ENCODE measurements at regions of chr15 and their contacts with region 1.

Region 1: GRCh38 chr15:86624261-86625036 is 544.8 kb downstream of the AGBL1 start:
- DNase-seq: peak; percentile 84
- H3K4me3 Mint-ChIP-seq: peak overlapping the region; percentile 4
- H3K27ac Mint-ChIP-seq: peak overlapping the region; percentile 69
- H3K4me1 Mint-ChIP-seq: peaks cover 19% of the 10 kb centered on the region
- H3K27me3 Mint-ChIP-seq: no peaks in the 10 kb centered on the region

Region 2: DNA sequence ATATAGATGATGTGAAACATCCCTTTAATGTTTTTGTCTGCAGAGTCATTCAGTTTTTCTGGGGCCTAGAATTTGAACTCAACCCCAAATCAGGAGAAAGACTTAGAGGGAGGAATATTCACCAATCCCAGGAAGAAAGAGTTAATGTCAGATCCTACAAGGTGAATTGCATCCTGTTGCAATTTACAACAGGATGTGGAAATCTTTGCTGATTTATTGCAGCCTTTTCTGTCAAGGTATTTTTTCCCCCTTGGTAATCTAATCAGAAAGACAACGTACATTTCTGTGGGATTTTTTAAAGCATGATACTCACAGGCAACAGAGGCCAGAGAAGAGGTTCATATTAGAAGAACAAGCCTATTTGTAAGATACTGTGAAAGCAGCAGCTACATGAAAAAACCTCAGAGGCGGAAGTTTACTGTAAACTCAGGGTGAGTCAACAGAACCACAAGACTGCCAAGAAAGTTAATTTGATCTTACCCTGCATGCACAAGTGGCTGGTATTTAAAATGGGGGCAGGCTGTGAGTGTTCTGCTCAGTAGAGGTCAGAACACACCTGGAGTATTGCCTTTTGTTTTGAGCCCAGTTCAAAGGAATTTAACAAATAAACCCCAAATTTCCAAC is 12.9 kb before region 1 on chr15:
- intact Hi-C with region 1: loop called (anchors 2 kb)
- DNase-seq: peak; percentile 80
- H3K4me3 Mint-ChIP-seq: peak overlapping the region; percentile 49
- H3K27ac Mint-ChIP-seq: peak overlapping the region; percentile 81
- H3K4me1 Mint-ChIP-seq: peaks cover 45% of the 10 kb centered on the region
- H3K27me3 Mint-ChIP-seq: no peaks in the 10 kb centered on the region

Region 3: GRCh38 chr15:86647810-86648440 is 23.5 kb after region 1 on chr15:
- intact Hi-C with region 1: loop called (anchors 1 kb)
- DNase-seq: no peak
- H3K4me3 Mint-ChIP-seq: no peak overlapping the region
- H3K27ac Mint-ChIP-seq: no peak overlapping the region
- H3K4me1 Mint-ChIP-seq: peaks cover 7% of the 10 kb centered on the region
- H3K27me3 Mint-ChIP-seq: no peaks in the 10 kb centered on the region

Region 4: GRCh38 chr15:86743283-86743903 is 118.9 kb after region 1 on chr15:
- intact Hi-C with region 1: loop called (anchors 1 kb)
- DNase-seq: peak; percentile 82
- H3K4me3 Mint-ChIP-seq: no peak overlapping the region
- H3K27ac Mint-ChIP-seq: no peak overlapping the region
- H3K4me1 Mint-ChIP-seq: no peaks in the 10 kb centered on the region
- H3K27me3 Mint-ChIP-seq: no peaks in the 10 kb centered on the region

Region 5: DNA sequence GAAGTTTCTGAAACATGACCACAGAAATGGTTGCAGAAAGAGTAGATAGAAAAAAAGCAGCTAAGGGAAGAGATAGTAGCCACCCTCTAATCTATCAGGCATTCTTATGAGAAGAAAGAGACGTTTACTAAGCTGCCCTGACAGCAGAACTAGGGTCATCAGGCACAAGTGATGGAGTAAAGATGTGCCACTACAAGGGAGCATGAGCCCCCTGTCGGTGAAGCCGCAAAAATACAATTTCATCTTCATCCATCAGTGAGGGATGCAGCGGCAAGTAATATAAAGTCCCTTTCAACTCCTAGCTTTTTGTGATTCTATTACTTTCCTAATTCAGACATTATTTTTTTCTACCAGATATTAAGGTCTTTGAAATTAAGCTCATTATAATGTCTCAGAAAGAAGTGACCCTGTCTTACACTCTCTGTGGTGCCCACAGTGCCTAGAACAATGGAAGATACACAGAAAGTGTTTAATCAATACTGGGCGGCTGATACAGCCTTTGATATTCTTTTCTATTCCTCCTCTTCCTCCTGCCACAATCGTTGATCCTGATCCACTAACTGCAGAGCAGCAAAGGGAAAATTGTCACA is 980.5 kb after region 1 on chr15:
- intact Hi-C with region 1: loop called (anchors 2 kb)
- DNase-seq: peak; percentile 70
- H3K4me3 Mint-ChIP-seq: no peak overlapping the region
- H3K27ac Mint-ChIP-seq: no peak overlapping the region
- H3K4me1 Mint-ChIP-seq: no peaks in the 10 kb centered on the region
- H3K27me3 Mint-ChIP-seq: peaks cover 7% of the 10 kb centered on the region